ENCODE measurements at regions of chr1 and their contacts with region 1.

Region 1: GRCh38 chr1:98053471-98054366 is 132.9 kb upstream of the DPYD start:
- DNase-seq: peak; percentile 78
- ATAC-seq: peak; percentile 100

Region 2: GRCh38 chr1:96966536-96967138 is 1087.1 kb before region 1 on chr1:
- intact Hi-C with region 1: loop called (anchors 5 kb)
- DNase-seq: peak; percentile 75
- ATAC-seq: peak; percentile 81

Region 3: DNA sequence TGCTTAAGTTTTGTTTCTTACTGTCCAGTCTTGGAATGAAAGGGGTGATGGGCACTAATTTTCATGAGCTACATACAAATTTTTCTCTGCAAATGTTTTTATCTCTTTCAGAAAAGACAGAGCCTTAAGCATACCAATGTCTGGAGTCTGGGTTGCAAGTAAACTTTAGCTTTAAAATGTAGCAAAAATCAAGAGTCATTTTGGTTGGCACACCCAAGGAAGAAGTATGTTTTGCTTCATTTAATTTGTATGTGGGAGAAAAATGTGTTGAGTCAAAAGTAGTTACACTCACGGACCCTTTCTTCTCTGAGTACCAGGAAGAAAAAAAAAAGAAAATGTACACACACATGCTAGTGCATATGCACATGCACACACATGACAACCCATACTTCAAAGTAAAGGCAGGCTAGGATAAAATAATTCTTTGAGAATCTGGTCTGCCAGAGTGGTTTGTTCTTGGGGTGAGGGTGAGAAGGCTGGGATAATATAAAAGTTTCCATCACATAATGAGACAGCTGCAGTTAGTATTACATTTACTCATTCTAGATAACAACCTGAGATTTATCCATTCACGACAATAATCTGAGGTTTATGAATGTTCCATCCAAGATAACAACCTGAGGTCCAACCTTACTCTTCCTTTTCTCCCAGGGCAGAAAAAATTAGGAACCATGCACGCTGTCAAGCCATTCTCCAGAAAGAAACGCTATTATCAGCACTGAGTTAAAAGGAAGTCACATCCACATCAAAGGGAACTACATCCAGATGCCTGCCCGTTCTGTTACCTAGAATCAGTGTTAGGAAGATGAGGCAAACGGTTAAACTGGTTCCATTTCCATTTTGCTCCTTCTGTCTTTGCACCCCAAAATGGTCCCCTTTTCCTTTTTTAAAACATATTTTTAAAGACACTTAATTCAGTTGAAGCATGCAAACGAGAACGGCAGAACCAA is 142.2 kb before region 1 on chr1:
- intact Hi-C with region 1: no loop called
- DNase-seq: no peak
- ATAC-seq: no peak

Region 4: DNA sequence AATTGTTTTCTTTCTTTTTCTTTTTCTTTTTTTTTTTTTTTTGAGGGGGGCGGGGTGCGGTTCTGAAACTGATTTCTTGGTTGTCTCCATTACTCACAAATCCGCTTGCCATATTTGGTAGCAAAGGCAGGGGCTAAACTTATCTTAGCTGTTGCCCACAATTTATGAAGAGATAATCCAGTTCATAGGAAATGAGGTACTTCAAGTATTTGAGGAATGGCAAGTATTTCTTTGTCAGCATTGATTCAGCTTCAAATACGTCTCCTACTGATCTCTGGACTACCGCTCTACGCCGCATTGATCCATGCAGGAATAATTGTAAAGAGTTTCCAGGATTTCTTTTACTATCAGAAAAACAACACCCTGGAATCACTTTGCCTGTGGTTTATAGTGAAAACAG is 156.3 kb after region 1 on chr1:
- intact Hi-C with region 1: no loop called
- DNase-seq: no peak
- ATAC-seq: no peak

Region 5: GRCh38 chr1:98251497-98251896 is 197.8 kb after region 1 on chr1:
- intact Hi-C with region 1: no loop called
- DNase-seq: no peak
- ATAC-seq: no peak